A549 (cell line): ENCODE measurements at regions of chr1 and their contacts with region 1.

Region 1: DNA sequence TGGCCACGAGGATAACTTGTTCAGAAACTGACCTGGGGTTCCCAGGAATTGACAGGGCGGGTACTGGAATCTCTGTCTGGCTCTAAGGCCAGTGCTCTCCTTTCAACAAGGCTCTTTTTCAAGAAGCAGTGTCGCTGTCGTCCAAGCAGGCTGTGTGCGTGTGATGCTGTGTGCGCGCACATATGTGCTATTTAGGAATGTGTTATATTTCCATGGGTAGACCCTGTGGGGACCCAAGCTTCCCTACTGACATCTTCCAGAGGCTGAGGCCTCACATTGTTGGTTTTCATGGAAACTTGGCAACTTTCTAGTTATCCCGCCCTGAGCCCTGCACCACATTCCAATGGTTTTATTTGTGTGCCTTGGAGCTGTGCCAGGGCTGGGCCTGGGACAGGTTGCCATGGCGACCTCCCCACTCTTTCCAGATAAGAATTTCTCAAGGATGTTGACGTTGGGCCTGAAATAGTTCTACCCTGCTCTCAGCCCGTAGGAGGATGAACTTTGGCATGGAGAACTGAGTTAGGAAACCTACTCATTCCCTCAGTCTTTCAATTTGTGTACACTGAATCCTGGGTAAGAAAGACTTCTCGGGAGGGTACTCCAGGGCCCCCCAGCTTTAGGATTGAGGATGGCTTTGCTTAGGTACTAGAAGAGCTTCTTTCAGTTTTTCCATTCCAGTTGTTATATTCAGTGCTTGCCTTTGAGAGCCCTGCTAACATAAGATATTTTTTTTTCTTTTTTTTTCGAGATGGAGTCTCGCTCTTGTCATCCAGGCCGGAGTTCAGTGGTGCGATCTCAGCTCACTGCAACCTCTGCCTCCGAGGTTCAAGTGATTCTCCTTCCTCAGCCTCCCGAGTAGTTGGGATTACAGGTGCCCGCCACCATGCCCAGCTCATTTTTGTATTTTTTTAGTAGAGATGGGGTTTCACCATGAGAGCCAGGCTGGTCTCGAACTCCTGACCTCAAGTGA is 38.8 kb upstream of the SRSF10 start:
- DNase-seq: peak; percentile 90 to 98
- ATAC-seq: peak; percentile 86 to 93
- H3K4me3 ChIP-seq: peak overlapping the region; percentile 17; the same call in 1 of the 3 replicates
- H3K27ac ChIP-seq: peak overlapping the region; percentile 96 to 99
- H3K4me1 ChIP-seq: peaks cover 79% of the 10 kb centered on the region
- CTCF ChIP-seq: no peak
- EP300 ChIP-seq: peak in 1 of 2 experiments; percentile 57; a peak in 1 of 5 replicates
- POLR2A ChIP-seq: no peak
- RAD21 ChIP-seq: peak; percentile 22 to 34; a peak in 2 of 5 replicates

Region 2: GRCh38 chr1:23979878-23980724 is 38.8 kb before region 1 on chr1 and contains the start of gene SRSF10:
- CTCF ChIA-PET with region 1: interaction called, 5 read pairs
- POLR2A ChIA-PET with region 1: interaction called, 13 read pairs
- DNase-seq: peak; percentile 87 to 98
- ATAC-seq: peak; percentile 96 to 99
- H3K4me3 ChIP-seq: peak within 1 kb of the TSS; percentile 97
- H3K27ac ChIP-seq: peak within 1 kb of the TSS; percentile 98 to 100
- H3K4me1 ChIP-seq: peaks cover 54% of the 10 kb centered on the region
- CTCF ChIP-seq: no peak; the same call in 2 of the 3 replicates
- EP300 ChIP-seq: no peak
- POLR2A ChIP-seq: peak; percentile 80
- RAD21 ChIP-seq: peak in 1 of 2 experiments; percentile 27; a peak in 1 of 5 replicates
- polyA plus RNA-seq, gene SRSF10: 119 and 180 TPM in 2 replicates